ENCODE measurements at regions of chr18 and their contacts with region 1.

Region 1: GRCh38 chr18:72391951-72392350 is 152.2 kb downstream of the CBLN2 start:
- DNase-seq: no peak
- ATAC-seq: no peak
- H3K4me3 ChIP-seq: no peak overlapping the region
- H3K27ac ChIP-seq: no peak overlapping the region
- H3K4me1 ChIP-seq: no peaks in the 10 kb centered on the region
- H3K27me3 ChIP-seq: no peaks in the 10 kb centered on the region
- CTCF ChIP-seq: no peak

Region 2: DNA sequence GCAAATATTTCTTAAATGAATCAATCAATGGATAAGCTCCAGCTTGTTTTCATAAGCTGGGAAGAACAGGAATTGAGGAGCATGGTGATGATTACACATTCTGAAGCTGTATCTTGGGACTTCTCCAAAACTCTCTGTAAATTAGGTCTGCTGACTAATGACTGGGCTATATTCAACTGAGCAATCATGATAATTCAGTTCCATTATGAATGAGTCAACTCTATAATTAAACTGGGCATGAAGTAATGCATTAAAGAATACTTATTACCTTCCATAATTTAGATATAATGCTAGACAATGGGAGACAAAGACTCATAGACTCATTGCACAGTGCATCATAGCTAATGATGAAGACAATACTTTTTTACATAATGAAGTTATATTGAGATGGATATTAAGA is 55.2 kb before region 1 on chr18:
- intact Hi-C with region 1: loop called in 1 of 10 experiments (anchors 10 kb)
- DNase-seq: no peak
- ATAC-seq: no peak
- H3K4me3 ChIP-seq: no peak overlapping the region
- H3K27ac ChIP-seq: no peak overlapping the region
- H3K4me1 ChIP-seq: no peaks in the 10 kb centered on the region
- H3K27me3 ChIP-seq: no peaks in the 10 kb centered on the region
- CTCF ChIP-seq: no peak